Right lobe of liver (tissue), 6 donors: ENCODE measurements at regions of chr9 and their contacts with region 1.

Region 1: DNA sequence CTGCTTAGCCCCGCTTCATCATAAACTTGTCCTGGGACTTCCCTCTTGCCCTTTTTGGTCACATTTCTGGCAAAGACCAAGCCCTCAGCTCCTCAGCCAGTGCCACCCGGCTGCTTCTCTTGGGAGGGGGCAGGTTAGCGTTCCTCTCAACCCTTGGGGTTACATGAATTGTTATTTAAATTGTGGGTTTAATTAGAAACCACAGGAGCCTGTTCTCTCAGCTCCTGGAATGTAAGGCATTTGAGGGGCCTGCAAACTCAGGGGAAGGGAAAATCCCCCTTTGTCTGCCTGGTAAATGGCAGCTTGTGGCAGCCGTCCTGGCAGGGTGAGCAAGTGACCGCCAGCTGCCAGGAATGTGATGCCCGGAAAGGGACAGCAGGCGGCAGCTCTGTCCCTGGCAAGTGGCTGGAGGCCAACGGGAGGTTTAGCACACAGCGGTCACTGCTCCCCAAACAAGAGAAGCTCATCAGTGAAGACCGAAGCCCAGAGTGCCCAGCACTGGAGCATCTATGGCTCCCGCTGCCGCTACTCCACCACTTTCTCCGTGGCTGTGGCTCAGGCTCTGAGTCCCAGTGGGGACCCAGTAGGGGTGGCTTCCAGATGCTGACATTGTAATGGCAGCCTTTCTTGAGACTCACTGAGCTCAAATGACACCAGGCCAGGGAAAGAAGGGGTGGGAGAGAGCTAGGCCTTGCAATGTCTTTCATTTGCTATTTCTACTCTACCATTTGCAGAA is 51.7 kb downstream of the SHB start:
- DNase-seq: peak; percentile 91 to 95 (median 94)
- ATAC-seq: peak; percentile 84 to 93 (median 89)
- H3K4me3 ChIP-seq: no peak overlapping the region
- H3K27ac ChIP-seq: peak overlapping the region in 2 of 3 donors; percentile 65 to 79
- H3K4me1 ChIP-seq: peaks cover 0 to 48% (median 23%) of the 10 kb centered on the region in 4 donors
- H3K27me3 ChIP-seq: no peaks in the 10 kb centered on the region
- CTCF ChIP-seq: peak; percentile 46 to 70 (median 64)
- POLR2A ChIP-seq: peak; percentile 58

Region 2: DNA sequence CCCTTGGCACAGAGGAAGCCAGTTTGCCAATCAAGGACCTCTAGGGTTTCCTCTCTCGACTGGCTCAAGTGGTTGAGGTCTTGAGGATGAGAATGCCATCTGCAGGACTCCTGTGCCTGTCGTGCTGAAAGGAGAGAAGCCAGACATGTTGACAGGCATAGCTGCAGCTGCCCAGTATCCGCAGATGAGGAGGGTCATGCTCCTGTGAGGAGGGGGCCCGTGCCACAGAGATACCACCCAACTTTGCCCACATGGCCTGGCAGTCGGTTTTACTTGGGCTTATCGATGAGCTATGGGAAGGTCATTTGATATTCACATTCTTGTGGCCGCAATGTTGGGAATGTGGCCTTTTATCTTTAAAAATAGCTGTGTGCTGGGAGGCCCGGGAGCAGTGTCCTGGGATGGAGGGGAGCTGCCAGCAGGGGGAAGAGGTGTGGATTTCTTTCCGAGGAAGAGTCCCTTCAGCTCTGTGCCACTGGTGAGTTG is 349.2 kb before region 1 on chr9:
- intact Hi-C with region 1: no loop called
- DNase-seq: no peak
- ATAC-seq: no peak
- H3K4me3 ChIP-seq: no peak overlapping the region
- H3K27ac ChIP-seq: no peak overlapping the region
- H3K4me1 ChIP-seq: no peaks in the 10 kb centered on the region
- H3K27me3 ChIP-seq: no peaks in the 10 kb centered on the region
- CTCF ChIP-seq: no peak
- POLR2A ChIP-seq: no peak

Region 3: DNA sequence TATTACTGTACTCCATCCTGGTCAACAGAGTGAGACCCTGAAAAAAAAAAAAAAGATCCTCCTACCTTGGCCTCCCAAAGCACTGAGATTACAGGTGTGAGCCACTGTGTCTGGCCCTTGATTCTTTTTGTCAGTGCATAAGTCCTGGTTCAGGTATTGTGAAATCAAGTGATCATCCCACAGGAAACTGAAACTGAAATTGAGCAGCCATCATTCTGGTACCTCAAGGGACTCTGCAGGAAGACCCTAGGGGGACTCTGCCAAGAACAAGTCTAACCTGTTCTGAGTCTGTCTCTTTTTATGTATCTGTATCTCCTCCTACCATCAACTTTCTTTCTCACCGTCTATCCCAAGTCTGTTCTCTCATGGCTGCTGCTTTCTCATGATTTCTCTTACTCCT is 218.6 kb before region 1 on chr9:
- intact Hi-C with region 1: no loop called
- DNase-seq: no peak
- ATAC-seq: no peak
- H3K4me3 ChIP-seq: no peak overlapping the region
- H3K27ac ChIP-seq: no peak overlapping the region
- H3K4me1 ChIP-seq: peaks cover 0 to 16% (median 6%) of the 10 kb centered on the region in 4 donors
- H3K27me3 ChIP-seq: no peaks in the 10 kb centered on the region
- CTCF ChIP-seq: no peak
- POLR2A ChIP-seq: no peak

Region 4: GRCh38 chr9:37820142-37820541 is 197.2 kb before region 1 on chr9:
- intact Hi-C with region 1: no loop called
- DNase-seq: no peak
- ATAC-seq: no peak
- H3K4me3 ChIP-seq: no peak overlapping the region
- H3K27ac ChIP-seq: no peak overlapping the region
- H3K4me1 ChIP-seq: peaks cover 0 to 4% (median 0%) of the 10 kb centered on the region in 4 donors
- H3K27me3 ChIP-seq: no peaks in the 10 kb centered on the region
- CTCF ChIP-seq: no peak
- POLR2A ChIP-seq: no peak

Region 5: DNA sequence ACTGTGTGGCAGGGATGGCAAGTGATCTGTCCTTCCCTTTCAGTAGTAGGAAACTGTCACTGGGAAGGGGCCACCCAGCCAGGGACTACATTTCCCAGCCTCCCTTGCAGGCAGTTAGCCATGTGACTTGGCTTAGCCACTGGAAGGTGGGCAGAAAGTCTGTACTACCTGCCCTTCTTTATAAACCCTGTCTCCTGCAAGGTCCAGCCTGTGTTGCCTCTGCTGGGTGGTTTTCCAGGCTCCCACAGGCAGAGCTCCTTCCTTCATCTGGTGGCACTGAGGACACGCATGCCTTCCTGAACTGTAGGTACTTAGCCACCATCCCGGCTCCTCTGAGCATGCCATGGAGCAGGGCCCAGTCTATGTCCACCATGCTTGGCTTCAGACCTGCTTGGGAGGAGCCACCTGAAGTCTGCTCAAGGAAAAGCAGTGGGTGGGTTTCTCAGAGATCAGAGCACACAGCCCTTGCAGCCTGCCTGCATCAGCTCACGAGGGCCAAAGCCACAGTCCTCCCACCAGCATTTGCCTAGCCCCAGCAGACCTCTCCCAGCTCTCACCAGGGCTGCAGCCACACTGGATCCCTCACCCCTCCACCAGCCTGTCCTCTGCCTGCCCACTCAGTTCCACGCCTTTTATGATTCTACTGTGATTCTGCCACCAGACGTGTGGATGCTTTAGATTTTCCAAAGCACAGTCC is 96.7 kb before region 1 on chr9:
- intact Hi-C with region 1: loop called (anchors 10 kb)
- DNase-seq: peak in 1 of 3 donors; percentile 15
- ATAC-seq: peak in 3 of 4 donors; percentile 9 to 36 (median 27)
- H3K4me3 ChIP-seq: no peak overlapping the region
- H3K27ac ChIP-seq: no peak overlapping the region
- H3K4me1 ChIP-seq: peaks cover 0 to 6% (median 0%) of the 10 kb centered on the region in 4 donors
- H3K27me3 ChIP-seq: no peaks in the 10 kb centered on the region
- CTCF ChIP-seq: no peak
- POLR2A ChIP-seq: no peak

Region 6: DNA sequence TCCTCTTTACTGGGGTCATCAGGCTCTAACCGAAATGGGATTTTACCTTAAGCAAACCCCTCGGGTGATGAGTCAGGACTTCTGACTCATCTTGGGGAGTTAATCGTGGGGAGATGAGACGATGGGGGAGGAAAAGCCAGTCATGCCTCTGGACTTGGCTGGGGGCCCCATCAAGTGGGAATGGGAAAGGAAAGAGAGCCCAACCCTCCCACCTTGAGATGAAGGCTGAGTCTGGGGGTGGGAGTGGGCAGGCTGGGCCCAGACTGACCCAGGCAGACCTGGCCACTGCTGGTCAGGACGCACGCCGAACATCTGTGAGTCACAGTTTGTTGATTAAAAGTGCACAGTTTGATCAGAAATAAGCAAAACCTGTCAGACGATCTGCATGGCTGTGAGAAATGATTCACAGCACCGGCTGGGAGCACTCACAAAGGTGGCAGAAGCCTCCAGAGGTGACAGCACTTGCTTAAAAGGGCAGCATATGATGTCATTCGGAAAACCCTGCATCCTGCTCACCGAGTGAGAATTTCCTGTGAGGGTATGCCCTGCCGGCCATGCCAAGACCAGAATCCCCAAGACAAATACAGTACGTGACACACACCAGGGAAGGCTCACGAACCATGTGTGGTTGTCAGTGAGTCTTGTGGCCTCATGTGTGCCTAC is 63.4 kb before region 1 on chr9:
- intact Hi-C with region 1: loop called in 1 of 2 experiments (anchors 10 kb)
- DNase-seq: no peak
- ATAC-seq: peak in 2 of 4 donors; percentile 21 to 35
- H3K4me3 ChIP-seq: no peak overlapping the region
- H3K27ac ChIP-seq: no peak overlapping the region
- H3K4me1 ChIP-seq: no peaks in the 10 kb centered on the region
- H3K27me3 ChIP-seq: no peaks in the 10 kb centered on the region
- CTCF ChIP-seq: no peak
- POLR2A ChIP-seq: no peak

Region 7: DNA sequence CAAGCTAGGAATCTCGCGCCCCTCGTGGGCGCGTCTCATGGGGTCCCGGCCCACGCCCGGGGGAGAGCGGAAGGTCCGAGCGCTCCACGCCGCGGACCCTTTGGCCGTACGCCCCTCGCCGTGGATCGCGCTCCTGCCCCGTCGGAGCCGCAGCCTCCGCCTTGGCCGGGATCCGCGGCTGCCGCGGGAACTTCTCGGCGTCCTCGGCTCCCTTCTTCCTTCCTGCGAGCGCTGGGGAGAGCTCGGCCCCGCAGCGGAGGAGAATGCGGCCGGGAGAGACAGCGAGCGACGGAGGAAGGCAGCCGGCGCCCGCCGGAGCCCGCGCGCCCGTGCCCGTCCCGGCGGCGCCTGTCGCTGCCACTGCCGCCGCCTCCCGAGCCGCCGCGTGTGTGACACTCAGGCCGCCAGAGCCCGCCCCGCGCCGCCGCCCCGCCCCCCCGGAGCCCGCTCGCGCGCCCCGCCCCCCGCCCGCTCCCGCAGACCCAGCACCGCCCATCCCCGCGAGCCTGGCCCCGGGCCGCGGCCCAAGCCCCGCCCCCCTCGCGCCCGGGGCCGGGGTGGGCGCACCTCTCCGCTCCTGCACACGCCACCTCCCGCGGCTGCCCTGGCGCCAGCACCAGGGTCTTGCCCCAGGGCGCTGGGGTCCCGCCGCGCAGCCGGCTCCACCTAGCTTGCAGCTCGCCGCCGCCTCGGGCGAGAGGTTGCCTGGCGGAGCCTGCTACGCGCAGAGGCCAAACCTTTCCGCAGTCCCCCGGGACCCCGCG is 51.7 kb after region 1 on chr9 and contains the start of gene SHB:
- intact Hi-C with region 1: loop called (anchors 10 kb)
- DNase-seq: peak; percentile 88 to 90 (median 90)
- ATAC-seq: peak; percentile 55 to 78 (median 72)
- H3K4me3 ChIP-seq: peak within 1 kb of the TSS; percentile 99
- H3K27ac ChIP-seq: peak within 1 kb of the TSS; percentile 84 to 98 (median 93)
- H3K4me1 ChIP-seq: peaks cover 0 to 25% (median 5%) of the 10 kb centered on the region in 4 donors
- H3K27me3 ChIP-seq: no peaks in the 10 kb centered on the region
- CTCF ChIP-seq: peak in 3 of 4 donors; percentile 24 to 40 (median 24)
- POLR2A ChIP-seq: peak; percentile 98
- total RNA-seq, gene SHB: 12.0 to 43.1 (median 21.9) TPM